Heart left ventricle (tissue), 16 donors: ENCODE measurements at regions of chr10 and their contacts with region 1.

Region 1: GRCh38 chr10:100872034-100872791 is 40.5 kb upstream of the SLF2 start:
- DNase-seq: no peak
- ATAC-seq: peak in 1 of 4 donors; percentile 42
- H3K4me3 ChIP-seq: no peak overlapping the region
- H3K27ac ChIP-seq: no peak overlapping the region
- H3K4me1 ChIP-seq: no peaks in the 10 kb centered on the region
- H3K27me3 ChIP-seq: peaks cover 0 to 60% (median 21%) of the 10 kb centered on the region in 9 donors
- CTCF ChIP-seq: peak in 10 of 12 donors; percentile 5 to 47 (median 35)
- POLR2A ChIP-seq: no peak

Region 2: GRCh38 chr10:100562008-100562711 is 310.1 kb before region 1 on chr10:
- intact Hi-C with region 1: loop called in 7 of 10 experiments (anchors 5 to 10 kb)
- DNase-seq: peak; percentile 36 to 78 (median 50)
- ATAC-seq: peak; percentile 73 to 86 (median 85)
- H3K4me3 ChIP-seq: peak overlapping the region in 6 of 12 donors; percentile 3 to 30 (median 7)
- H3K27ac ChIP-seq: no peak overlapping the region
- H3K4me1 ChIP-seq: peaks cover 0 to 15% (median 10%) of the 10 kb centered on the region in 12 donors
- H3K27me3 ChIP-seq: peaks cover 6 to 57% (median 43%) of the 10 kb centered on the region in 9 donors
- CTCF ChIP-seq: peak; percentile 47 to 78 (median 70)
- POLR2A ChIP-seq: no peak

Region 3: GRCh38 chr10:100677290-100677945 is 194.8 kb before region 1 on chr10:
- intact Hi-C with region 1: loop called in 4 of 10 experiments (anchors 5 to 10 kb)
- DNase-seq: no peak
- ATAC-seq: no peak
- H3K4me3 ChIP-seq: no peak overlapping the region
- H3K27ac ChIP-seq: no peak overlapping the region
- H3K4me1 ChIP-seq: peaks cover 0 to 6% (median 0%) of the 10 kb centered on the region in 12 donors
- H3K27me3 ChIP-seq: peaks cover 7 to 92% (median 46%) of the 10 kb centered on the region in 9 donors
- CTCF ChIP-seq: no peak
- POLR2A ChIP-seq: no peak

Region 4: DNA sequence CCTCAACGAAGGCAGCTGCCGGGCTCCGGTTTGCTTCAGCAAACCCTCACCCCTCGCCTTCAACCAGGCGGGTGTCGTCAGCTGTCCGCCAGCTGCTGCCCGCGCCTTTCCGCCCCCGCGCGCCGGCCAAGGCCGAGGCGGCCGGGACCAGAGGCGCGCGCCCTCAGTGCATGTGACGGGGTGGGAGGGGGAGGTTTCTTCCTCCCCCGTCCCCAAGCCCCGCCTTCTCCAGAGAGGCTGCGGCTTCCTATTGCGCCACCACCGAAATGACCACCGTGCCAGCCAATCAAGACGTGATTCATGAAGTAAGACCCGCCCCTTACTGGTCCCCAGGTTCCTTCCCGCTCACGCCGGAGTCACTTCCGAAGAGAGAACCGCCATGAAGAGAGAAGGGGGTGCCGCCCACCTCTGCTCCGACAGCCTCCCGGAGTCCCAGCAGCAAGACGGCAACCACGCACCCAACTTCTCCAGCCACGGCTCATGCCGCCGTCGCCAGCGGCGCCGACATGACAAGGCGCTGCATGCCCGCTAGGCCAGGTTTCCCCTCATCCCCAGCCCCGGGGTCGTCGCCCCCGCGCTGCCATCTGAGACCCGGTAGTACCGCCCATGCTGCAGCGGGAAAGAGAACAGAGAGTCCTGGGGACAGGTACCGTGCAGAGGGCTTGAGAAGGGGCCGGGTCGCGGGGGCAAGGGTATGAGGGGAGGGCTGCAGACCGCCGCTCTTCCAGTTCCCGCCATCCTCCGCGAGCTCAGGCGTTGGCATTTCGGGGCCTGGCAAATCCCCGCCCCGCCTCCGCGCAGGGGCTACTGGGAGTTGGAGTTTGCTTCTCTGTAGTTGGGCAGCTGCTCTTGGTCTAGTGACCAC is 40.6 kb after region 1 on chr10 and contains the start of gene SLF2:
- intact Hi-C with region 1: no loop called
- DNase-seq: peak; percentile 97 to 99 (median 99)
- ATAC-seq: peak; percentile 96 to 99 (median 98)
- H3K4me3 ChIP-seq: peak within 1 kb of the TSS; percentile 77 to 99 (median 88)
- H3K27ac ChIP-seq: peak within 1 kb of the TSS; percentile 93 to 99 (median 96)
- H3K4me1 ChIP-seq: peaks cover 0 to 47% (median 36%) of the 10 kb centered on the region in 12 donors
- H3K27me3 ChIP-seq: no peaks in the 10 kb centered on the region
- CTCF ChIP-seq: peak in 1 of 12 donors; percentile 9
- POLR2A ChIP-seq: no peak
- total RNA-seq, gene SLF2: 9.2 to 26.9 (median 17.9) TPM